ENCODE measurements at regions of chr6 and their contacts with region 1.

Region 1: DNA sequence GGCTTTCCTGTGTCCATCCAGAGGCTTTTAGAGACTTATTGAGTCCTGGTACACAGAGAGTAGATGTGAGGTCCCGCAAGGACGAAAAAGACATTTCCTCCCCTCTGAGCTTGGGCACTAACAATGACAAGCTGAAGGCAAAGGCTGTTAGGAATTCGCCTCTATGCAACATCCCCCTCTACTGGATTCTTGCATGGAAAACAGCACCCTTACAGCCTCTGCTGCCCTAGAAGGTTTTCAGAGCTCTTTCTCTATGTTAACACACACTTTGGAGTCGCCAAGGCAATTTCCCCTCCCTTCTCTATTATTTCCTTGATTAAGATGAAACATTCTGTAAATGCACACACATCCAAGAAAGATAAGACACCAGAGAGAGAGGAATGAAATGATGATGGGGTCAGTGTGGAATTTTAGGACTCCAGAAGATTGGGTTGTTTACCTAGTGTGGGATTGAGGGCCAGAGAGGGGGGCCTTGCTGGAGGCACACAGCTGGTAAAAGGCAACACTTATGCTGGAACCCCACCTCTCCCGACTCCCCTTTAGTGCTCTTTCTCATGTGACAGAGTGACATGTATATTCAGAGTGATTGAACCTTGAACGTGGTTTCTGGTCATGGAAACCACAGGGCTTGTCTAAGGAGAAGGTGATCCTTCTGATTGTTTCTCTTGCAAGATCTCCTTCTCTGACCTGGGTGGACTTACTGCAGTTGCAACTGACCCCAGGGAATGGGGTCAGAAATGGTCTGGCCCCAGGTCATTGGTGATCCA is 300.7 kb downstream of the CLIC5 start:
- DNase-seq: peak; percentile 88
- H3K4me3 Mint-ChIP-seq: peak overlapping the region; percentile 50
- H3K27ac Mint-ChIP-seq: peak overlapping the region; percentile 89
- H3K4me1 Mint-ChIP-seq: peaks cover 53% of the 10 kb centered on the region
- H3K27me3 Mint-ChIP-seq: peaks cover 3% of the 10 kb centered on the region

Region 2: GRCh38 chr6:44655412-44656342 is 1059.2 kb before region 1 on chr6:
- intact Hi-C with region 1: loop called (anchors 2 kb)
- DNase-seq: peak; percentile 92
- H3K4me3 Mint-ChIP-seq: peak overlapping the region; percentile 51
- H3K27ac Mint-ChIP-seq: peak overlapping the region; percentile 80
- H3K4me1 Mint-ChIP-seq: peaks cover 13% of the 10 kb centered on the region
- H3K27me3 Mint-ChIP-seq: peaks cover 2% of the 10 kb centered on the region

Region 3: GRCh38 chr6:45163952-45164766 is 550.8 kb before region 1 on chr6:
- intact Hi-C with region 1: loop called (anchors 2 kb)
- DNase-seq: peak; percentile 79
- H3K4me3 Mint-ChIP-seq: peak overlapping the region; percentile 58
- H3K27ac Mint-ChIP-seq: peak overlapping the region; percentile 92
- H3K4me1 Mint-ChIP-seq: peaks cover 38% of the 10 kb centered on the region
- H3K27me3 Mint-ChIP-seq: no peaks in the 10 kb centered on the region

Region 4: DNA sequence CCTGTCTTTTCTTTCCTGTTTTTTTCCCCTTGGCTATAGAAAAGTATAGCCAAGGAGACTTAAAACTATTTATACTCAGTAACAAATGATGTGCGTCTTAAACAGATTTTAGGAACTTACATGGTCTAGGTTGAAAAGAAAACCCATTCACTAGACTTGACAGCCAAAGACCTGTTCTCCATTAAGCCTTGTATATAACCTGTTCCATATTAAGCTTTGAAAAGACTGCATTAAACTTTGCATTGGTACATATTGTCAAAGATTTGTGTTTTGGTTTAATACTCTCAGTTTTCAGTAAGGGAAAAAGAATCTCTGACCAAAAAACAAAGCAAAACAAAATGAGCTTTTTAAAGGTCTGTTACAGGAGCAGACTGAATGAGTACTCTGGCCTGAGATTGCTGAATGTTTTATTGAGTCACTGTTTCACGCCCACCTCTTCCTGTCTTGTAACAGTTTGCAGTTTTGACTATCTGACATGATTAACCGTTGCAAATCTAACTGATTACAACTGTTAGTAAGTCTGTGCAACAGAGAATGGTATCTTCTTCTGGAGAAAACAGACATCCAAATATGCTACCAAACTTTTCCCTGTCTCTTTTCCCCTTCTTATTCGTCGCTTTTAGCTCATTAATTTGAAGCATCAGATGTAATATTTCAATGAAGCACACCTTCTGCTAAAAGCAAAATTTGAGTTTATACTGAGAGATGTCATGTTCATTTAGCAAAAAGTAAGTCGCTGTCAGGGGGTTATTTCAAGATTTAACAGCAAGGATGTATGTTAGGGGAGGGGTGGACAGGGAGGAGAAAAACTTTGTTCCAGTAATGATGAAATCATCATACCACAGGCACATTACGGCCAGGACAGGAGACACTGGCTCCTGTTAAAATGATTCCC is 278.1 kb before region 1 on chr6:
- intact Hi-C with region 1: loop called (anchors 2 kb)
- DNase-seq: peak; percentile 75
- H3K4me3 Mint-ChIP-seq: peak overlapping the region; percentile 79
- H3K27ac Mint-ChIP-seq: peak overlapping the region; percentile 91
- H3K4me1 Mint-ChIP-seq: peaks cover 60% of the 10 kb centered on the region
- H3K27me3 Mint-ChIP-seq: no peaks in the 10 kb centered on the region

Region 5: DNA sequence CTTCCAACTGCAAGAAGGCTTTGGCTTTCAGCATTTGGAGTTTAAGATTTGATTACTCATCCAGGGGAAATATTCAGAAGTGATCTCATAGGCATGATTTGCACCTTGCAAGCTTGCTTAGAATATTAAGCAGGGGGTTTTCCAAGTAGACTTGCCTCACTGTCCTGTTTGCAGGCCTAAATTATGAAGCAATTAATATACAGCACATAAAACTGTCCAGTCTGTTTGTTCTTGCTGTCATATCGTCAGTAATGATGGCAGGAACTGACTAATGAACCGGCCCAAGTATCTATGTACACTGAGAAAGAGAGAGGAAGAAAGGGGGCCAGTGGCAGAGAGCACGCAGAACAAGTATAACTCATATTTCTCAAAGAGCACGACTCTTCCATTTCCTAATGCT is 124.7 kb before region 1 on chr6:
- intact Hi-C with region 1: loop called (anchors 1 kb)
- DNase-seq: peak; percentile 54
- H3K4me3 Mint-ChIP-seq: no peak overlapping the region
- H3K27ac Mint-ChIP-seq: peak overlapping the region; percentile 57
- H3K4me1 Mint-ChIP-seq: peaks cover 75% of the 10 kb centered on the region
- H3K27me3 Mint-ChIP-seq: no peaks in the 10 kb centered on the region

Region 6: DNA sequence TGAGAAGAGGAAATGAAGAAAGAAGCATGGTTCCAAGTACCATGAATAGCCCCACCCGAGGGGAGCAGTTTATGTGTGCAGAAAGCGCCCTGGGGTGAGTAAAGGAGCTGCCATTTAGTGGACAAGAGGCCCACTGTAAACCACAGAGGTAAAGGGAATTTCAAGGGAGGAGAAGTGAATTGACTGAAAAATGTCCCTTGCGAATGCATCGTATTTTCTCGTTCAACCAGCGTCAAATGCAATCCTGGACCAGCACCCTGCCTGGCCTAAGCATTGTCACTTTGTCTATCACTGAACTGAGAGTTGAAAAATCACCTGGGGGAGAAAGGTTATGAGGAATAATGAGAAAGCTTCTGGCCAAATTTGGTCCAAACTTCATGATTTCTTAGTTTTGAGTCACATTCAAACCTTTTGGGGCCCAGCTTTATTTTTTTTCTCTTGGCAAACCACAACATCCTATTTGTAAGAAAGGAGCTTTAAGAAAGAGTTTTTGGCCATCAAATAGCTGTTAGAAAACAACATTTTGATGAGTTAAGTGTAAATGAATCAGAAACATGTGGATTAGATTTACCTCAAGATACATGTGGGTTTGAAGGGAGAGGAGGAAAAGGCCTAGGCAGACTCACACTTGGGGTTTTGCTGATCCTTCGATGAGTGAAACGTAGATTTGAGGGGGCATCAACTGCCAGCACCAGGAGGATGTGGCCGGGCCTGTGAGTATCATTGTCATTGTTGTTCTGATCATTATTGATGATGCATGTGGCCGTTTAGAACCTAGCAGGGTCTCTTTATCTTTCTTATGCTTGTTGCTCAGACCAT is 86.8 kb after region 1 on chr6:
- intact Hi-C with region 1: loop called (anchors 1 kb)
- DNase-seq: peak; percentile 78
- H3K4me3 Mint-ChIP-seq: peak overlapping the region; percentile 28
- H3K27ac Mint-ChIP-seq: peak overlapping the region; percentile 86
- H3K4me1 Mint-ChIP-seq: peaks cover 21% of the 10 kb centered on the region
- H3K27me3 Mint-ChIP-seq: no peaks in the 10 kb centered on the region

Region 7: GRCh38 chr6:46011241-46012085 is 296.5 kb after region 1 on chr6:
- intact Hi-C with region 1: loop called (anchors 10 kb)
- DNase-seq: peak; percentile 91
- H3K4me3 Mint-ChIP-seq: peak overlapping the region; percentile 64
- H3K27ac Mint-ChIP-seq: peak overlapping the region; percentile 79
- H3K4me1 Mint-ChIP-seq: peaks cover 52% of the 10 kb centered on the region
- H3K27me3 Mint-ChIP-seq: peaks cover 9% of the 10 kb centered on the region